Activated CD8-positive, alpha-beta T cell treated with anti-CD3 and anti-CD28 coated beads, Interleukin-2, amount 10 ng/mL, durations not matched to agents 7 days and 5 days (primary cell): ENCODE measurements at regions of chrX and their contacts with region 1.

Region 1: GRCh38 chrX:153927922-153928760 is 2.1 kb upstream of the ARHGAP4 start:
- DNase-seq: peak; percentile 94
- ATAC-seq: peak; percentile 85
- H3K4me3 Mint-ChIP-seq: peak overlapping the region; percentile 86
- H3K27ac Mint-ChIP-seq: peak overlapping the region; percentile 98
- H3K4me1 Mint-ChIP-seq: peaks cover 28% of the 10 kb centered on the region
- H3K27me3 Mint-ChIP-seq: no peaks in the 10 kb centered on the region

Region 2: DNA sequence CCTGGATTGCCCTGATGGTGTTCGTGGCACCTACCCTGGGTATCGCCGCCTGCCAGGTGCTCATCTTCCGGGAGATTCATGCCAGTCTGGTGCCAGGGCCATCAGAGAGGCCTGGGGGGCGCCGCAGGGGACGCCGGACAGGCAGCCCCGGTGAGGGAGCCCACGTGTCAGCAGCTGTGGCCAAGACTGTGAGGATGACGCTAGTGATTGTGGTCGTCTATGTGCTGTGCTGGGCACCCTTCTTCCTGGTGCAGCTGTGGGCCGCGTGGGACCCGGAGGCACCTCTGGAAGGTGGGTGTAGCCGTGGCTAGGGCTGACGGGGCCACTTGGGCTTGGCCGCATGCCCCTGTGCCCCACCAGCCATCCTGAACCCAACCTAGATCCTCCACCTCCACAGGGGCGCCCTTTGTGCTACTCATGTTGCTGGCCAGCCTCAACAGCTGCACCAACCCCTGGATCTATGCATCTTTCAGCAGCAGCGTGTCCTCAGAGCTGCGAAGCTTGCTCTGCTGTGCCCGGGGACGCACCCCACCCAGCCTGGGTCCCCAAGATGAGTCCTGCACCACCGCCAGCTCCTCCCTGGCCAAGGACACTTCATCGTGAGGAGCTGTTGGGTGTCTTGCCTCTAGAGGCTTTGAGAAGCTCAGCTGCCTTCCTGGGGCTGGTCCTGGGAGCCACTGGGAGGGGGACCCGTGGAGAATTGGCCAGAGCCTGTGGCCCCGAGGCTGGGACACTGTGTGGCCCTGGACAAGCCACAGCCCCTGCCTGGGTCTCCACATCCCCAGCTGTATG is 21.8 kb before region 1 on chrX:
- CTCF ChIA-PET with region 1: interaction called, 6 read pairs
- POLR2A ChIA-PET with region 1: interaction called, 20 read pairs
- DNase-seq: peak; percentile 39
- ATAC-seq: peak; percentile 28
- H3K4me3 Mint-ChIP-seq: no peak overlapping the region
- H3K27ac Mint-ChIP-seq: peak overlapping the region; percentile 46
- H3K4me1 Mint-ChIP-seq: peaks cover 44% of the 10 kb centered on the region
- H3K27me3 Mint-ChIP-seq: no peaks in the 10 kb centered on the region

Region 3: DNA sequence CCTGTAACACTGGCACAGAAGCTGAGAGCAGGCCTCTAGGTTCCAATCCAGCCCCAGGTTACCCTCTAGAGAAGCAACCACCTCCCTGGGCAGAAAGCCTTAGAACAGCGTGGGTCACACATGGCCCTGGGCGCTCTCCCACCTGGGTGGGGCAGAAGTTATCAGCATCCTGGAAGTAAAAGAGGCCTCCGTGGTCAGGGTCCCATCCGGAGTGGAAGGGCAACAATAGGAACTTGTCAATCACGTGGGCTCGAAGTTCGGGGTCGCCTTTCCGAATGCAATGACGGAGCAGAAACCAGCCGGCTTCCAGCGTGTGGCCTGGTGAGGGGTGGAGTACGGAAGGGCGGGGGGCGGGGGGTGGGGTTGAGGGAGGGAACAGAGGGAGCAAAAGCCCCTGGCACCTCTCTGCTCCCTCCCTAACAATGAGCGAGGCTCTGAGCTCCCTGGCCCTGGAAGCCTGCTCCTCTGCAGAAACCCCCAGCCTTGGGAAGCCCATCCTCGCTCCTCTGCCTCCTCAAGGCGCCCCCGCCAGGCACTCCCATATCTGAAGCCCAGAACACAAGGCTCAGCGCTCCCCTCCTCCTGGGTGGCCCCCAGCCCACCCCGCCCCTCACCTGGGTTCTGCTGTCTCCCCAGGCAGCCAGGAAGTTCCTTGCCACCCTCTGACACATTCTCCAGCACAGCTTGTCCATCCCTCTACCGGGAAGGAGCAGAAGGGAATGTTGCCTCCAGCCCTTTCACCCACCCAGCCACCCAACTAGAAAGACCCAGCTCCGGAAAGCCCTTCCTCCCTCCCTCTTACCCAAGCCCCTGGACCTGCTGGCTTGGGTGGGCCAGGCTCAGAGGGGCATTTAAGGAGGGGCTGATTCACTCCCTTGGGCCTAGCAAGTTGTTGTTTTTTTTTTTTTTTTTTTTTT is 13.5 kb after region 1 on chrX:
- CTCF ChIA-PET with region 1: interaction called, 228 read pairs
- POLR2A ChIA-PET with region 1: interaction called, 84 read pairs
- DNase-seq: no peak
- ATAC-seq: peak; percentile 18
- H3K4me3 Mint-ChIP-seq: peak overlapping the region; percentile 66
- H3K27ac Mint-ChIP-seq: peak overlapping the region; percentile 77
- H3K4me1 Mint-ChIP-seq: peaks cover 23% of the 10 kb centered on the region
- H3K27me3 Mint-ChIP-seq: no peaks in the 10 kb centered on the region

Region 4: DNA sequence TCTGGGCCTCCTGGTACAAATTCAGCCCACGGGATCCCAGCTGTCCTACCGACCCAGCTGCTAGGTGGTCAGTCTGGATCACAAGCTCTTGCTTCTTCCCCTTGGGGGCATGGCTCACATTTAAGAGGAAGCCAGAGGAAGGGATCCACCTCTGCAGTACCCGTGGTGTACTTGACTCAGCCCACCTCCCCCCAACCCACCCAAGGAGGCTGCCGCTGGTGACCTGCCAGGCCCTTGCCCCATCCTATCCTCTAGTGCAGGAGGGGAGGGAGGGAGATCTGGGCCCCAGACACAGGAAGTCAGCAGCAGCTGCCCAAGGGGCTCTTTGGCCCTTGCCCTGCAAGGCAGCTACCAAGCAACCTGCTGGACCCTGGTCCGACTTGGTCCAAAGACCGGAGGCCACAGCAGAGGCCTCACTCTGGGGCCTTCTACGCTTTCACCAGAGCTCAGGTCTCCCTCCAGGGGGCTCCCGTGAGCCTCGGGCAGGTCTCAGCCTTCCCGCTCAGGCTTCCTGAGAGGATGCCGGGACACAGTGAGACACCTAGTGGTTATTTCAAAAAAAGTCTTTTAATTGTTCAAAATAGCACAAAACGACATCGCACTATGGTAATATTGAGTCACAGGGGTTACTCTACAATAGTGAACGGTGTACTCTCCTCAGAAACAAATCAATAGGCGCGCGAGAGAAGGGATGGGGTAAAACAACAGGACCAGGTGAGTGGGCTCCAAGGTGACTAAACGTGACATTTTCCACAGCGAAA is 19.0 kb after region 1 on chrX:
- CTCF ChIA-PET with region 1: interaction called, 228 read pairs
- POLR2A ChIA-PET with region 1: interaction called, 84 read pairs
- DNase-seq: peak; percentile 83
- ATAC-seq: peak; percentile 76
- H3K4me3 Mint-ChIP-seq: no peak overlapping the region
- H3K27ac Mint-ChIP-seq: peak overlapping the region; percentile 82
- H3K4me1 Mint-ChIP-seq: peaks cover 49% of the 10 kb centered on the region
- H3K27me3 Mint-ChIP-seq: no peaks in the 10 kb centered on the region

Region 5: DNA sequence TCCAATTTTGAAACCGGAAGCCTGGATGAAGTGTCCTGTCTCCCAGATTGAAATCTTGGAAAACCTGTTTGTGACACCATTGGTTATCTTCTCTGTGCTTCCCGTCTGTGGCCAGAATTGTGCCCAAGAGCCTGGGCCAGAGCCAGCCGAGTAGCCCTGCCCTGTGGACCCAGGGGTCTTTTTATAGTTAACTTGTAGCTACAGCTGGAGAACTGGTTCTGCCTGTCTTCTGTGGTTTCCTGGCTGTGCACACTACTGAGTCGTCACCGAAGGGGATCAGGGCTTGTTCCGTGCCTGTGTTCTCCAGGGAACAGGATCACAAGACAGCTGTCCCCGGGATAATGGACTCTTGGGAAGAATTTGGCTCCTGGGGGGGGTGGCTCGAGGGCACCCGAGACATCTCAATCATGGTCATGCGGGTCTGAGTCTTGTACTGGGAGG is 193.8 kb after region 1 on chrX:
- CTCF ChIA-PET with region 1: no interaction called
- POLR2A ChIA-PET with region 1: no interaction called
- DNase-seq: no peak
- ATAC-seq: no peak
- H3K4me3 Mint-ChIP-seq: no peak overlapping the region
- H3K27ac Mint-ChIP-seq: no peak overlapping the region
- H3K4me1 Mint-ChIP-seq: peaks cover 28% of the 10 kb centered on the region
- H3K27me3 Mint-ChIP-seq: no peaks in the 10 kb centered on the region